Head of caudate nucleus (tissue), 42 donors: ENCODE measurements at regions of chr10 and their contacts with region 1.

Region 1: GRCh38 chr10:37976091-37976879 is at the start of gene ZNF25:
- DNase-seq: peak; percentile 97 to 100 (median 99)

Region 2: DNA sequence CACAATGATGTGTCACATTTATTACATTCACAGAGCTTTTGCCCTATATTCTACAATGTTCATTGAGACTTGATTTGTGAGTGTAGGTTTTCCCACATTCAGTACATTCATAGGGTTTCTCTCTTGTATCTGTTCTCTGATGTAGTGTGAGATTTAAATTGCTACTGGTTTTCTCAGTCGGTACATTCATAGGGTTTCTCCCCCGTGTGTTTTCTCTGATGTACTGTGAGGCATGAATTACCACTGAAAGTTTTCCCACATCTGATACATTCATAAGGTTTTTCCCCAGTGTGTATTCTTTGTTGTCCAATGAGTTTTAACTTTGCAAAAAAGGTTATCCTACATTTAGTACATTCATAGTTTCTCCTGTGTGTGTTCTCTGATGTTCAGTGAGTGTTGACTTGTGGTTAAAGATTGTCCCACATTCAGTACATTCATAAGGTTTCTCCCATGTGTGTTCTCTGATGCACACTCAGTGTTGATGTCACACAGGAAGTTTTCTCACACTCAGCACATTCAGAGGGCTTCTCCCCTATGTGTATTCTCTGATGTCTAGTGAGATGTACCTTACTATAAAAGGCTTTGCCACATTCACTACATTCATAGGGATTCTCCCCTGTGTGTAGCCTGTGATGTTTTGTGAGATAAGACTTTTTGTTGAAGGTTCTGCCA is 181.8 kb before region 1 on chr10:
- intact Hi-C with region 1: no loop called
- DNase-seq: no peak

Region 3: DNA sequence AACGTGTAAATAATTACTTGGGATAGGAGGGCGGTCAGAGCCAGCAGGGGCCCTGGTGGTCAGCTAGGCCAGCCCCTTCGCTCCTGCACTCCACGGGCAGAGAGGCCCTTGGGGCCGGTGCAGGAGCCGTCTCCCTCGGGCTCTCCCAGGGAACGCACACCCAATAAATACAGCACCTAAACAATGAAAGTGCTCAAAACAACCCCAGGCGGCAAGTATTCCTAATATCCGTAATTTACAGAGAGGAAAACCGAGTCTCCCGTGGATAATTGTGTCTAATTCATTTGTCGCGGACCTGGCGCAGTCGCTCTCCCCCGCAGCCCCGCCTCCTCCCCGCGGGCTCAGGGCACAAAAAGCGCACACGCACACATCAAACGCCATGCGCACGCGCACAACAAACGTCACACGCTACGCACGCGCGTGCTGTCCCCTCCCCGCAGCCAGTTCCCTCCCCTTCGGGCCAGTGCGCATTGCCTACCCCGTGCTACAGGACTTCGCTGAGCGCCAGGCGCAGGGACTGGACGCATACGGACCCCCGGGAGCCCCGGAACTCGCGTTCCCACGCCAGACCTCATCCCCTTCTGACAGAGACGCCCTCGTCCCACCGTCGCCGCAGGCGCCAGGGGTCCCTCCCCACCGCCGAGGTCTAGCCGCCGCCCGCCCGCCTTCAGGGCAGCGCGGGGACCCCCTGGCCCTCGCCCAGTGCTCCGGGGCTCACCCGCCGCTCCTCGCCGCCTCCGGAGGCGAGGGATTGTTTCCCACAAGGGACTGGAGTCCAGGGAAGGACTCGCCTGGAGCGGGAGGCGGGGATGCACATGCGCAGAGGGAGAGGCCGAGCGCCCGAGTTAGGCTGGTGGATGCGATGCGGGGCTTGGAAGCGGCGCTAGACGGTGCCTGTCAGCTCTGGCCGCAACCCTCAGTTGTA is 118.7 kb before region 1 on chr10 and contains the start of gene ZNF248:
- intact Hi-C with region 1: loop called (anchors 5 kb)
- DNase-seq: peak; percentile 92 to 98 (median 96)

Region 4: DNA sequence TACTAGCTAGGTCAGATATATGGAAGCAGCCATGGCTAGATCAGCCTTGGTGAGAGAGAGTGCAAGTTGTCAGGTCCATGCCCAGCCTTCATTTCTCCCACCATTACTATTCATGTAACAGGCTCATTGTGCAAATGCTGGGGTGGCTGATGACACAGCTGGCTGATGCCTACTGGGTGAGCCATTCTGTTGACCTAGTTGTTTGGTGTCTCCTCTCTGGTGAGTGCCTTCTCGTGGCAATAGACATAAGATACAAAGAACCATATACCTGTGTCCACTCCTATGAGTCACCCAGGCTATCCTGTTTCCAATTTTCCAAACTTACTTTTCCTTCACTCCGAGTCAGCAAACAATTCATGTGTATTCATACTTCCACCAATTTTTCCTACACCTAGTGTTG is 45.9 kb before region 1 on chr10:
- intact Hi-C with region 1: no loop called
- DNase-seq: no peak

Region 5: GRCh38 chr10:38010119-38010903 is 34.0 kb after region 1 on chr10 and contains the start of gene ZNF33A:
- intact Hi-C with region 1: loop called (anchors 1 kb)
- DNase-seq: peak; percentile 84 to 97 (median 92)

Region 6: DNA sequence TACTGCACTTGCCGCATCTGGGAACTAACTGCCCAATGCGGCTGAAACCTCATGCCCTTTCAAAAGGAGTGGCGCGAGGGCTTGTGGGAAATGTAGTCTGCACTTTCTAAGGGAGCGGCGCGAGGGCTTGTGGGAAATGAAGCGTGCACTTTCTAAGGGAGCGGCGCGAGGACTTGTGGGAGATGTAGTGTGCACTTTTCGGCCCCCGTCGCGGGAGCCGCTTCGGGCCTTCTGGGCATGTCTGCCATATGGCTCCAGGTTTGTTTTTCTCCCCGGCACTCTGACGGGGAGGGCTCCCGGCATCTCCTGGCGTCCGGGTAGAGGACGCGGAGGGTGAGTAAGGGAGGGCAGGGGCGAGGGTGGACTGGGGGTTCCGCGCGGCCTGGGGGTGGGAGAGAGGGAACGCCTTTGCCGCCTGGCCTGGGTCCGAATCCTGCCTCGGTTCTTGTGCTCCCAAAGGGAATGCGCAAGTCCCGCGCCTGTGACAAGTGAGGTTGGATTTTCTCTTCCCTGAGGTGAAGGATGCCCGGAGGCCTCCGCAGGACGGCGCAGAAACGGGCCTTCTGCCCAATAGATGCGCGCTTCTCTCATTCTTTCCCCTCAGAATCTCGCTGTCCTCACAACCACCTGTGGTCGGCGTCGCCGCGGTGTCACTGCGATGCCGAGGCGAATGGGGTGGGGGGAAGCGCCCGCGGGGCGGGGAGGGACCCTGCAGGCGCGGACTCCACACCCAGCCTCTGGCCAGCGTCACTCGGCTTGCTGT is 118.1 kb after region 1 on chr10 and contains the start of gene ZNF37A:
- intact Hi-C with region 1: loop called (anchors 2 kb)
- DNase-seq: peak; percentile 85 to 99 (median 95)